GM12878 (cell line): ENCODE measurements at regions of chr1 and their contacts with region 1.

Region 1: DNA sequence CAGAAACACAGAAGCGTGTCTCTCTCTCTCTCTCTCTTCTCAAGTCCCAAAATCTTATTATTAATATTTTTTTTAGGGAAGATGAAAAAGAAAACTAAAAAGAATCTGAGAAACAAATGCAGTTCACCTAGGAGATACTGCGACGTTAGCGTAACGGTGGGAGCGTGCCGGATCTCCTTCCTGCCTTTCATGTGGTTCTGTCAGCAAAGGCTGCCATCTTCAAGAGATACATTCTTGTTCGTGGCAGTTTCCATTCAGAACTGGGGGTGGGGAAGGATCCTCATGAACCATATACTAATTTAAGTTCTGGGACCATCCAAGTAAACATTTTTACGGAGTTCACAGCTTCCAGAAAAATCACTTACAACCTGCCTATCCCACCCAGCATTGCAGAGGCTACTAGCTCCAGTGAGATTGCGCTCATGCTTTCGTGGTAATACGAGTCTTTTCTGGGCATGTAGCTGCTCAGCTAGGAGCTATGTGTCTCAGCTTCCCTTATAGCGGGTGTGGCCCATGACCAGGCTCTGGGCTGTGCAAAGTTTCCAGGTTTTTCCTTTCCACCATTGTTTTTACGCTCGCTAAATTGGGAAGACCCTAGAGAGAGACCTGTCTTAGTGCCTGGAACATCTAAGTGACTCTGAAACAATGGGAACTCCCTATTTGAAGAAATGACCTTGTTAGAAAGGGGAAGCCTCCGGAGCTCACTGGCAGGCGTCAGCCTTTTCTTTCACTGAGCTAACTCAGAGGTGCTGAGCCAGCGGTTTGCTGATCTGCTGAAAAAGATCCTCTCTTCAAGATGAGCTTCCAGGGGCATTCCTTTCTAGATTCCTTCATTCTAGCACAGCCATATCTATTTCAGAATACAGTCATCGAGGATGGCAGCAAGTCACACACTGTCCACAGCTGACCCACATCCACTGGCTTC is 17.3 kb downstream of the SLAMF1 start:
- DNase-seq: no peak
- ATAC-seq: no peak
- H3K4me3 ChIP-seq: peak overlapping the region; percentile 3; the same call in 1 of the 2 replicates
- H3K27ac ChIP-seq: peak overlapping the region; percentile 30
- H3K4me1 ChIP-seq: peaks cover 69% of the 10 kb centered on the region
- H3K27me3 ChIP-seq: no peaks in the 10 kb centered on the region
- CTCF ChIP-seq: no peak
- EP300 ChIP-seq: no peak
- POLR2A ChIP-seq: peak; percentile 46
- RAD21 ChIP-seq: no peak

Region 2: GRCh38 chr1:160646711-160647328 is 17.3 kb after region 1 on chr1 and contains the start of gene SLAMF1:
- CTCF ChIA-PET with region 1: interaction called, 6 read pairs
- POLR2A ChIA-PET with region 1: interaction called, 68 read pairs
- RAD21 ChIA-PET with region 1: interaction called, 194 read pairs
- SMC1A ChIA-PET with region 1: interaction called, 259 read pairs
- in situ Hi-C with region 1: no loop called
- intact Hi-C with region 1: loop called (anchors 2 kb)
- DNase-seq: peak; percentile 95
- ATAC-seq: peak; percentile 63
- H3K4me3 ChIP-seq: peak within 1 kb of the TSS; percentile 95
- H3K27ac ChIP-seq: peak within 1 kb of the TSS; percentile 95
- H3K4me1 ChIP-seq: peaks cover 19% of the 10 kb centered on the region
- H3K27me3 ChIP-seq: no peaks in the 10 kb centered on the region
- CTCF ChIP-seq: no peak
- EP300 ChIP-seq: peak; percentile 5 to 19; a peak in 1 of 4 replicates
- POLR2A ChIP-seq: peak; percentile 82
- RAD21 ChIP-seq: no peak
- polyA plus RNA-seq, gene SLAMF1: 128 to 145 TPM

Region 3: DNA sequence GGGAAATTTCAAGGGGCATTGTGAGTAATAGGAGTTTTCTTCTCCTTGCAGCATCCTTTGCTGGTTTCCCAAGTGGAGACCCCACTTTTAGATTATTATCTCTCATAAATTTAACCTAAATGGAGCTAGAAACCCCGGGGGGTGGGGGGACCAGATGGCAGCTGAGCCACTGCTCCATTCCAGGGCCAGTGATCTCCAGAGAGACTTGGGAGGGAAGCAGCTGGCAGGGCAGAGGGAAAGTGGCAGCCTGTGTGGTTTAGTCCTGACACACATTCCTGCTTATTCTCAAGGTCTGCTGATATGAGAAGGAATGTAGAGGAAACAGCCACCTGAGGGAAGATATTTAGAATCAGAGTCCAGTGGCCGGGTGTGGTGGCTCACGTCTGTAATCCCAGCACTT is 645.3 kb after region 1 on chr1:
- CTCF ChIA-PET with region 1: no interaction called
- POLR2A ChIA-PET with region 1: no interaction called
- RAD21 ChIA-PET with region 1: no interaction called
- SMC1A ChIA-PET with region 1: no interaction called
- in situ Hi-C with region 1: no loop called
- intact Hi-C with region 1: no loop called
- DNase-seq: no peak
- ATAC-seq: no peak
- H3K4me3 ChIP-seq: no peak overlapping the region
- H3K27ac ChIP-seq: no peak overlapping the region
- H3K4me1 ChIP-seq: no peaks in the 10 kb centered on the region
- H3K27me3 ChIP-seq: no peaks in the 10 kb centered on the region; a peak in 1 of 4 replicates
- CTCF ChIP-seq: no peak
- EP300 ChIP-seq: no peak
- POLR2A ChIP-seq: no peak
- RAD21 ChIP-seq: no peak